MCF 10A (cell line): ENCODE measurements at regions of chr4 and their contacts with region 1.

Region 1: GRCh38 chr4:184384056-184384809 is 90.1 kb downstream of the IRF2 start:
- DNase-seq: peak; percentile 95
- H3K4me3 Mint-ChIP-seq: peak overlapping the region; percentile 68
- H3K27ac Mint-ChIP-seq: peak overlapping the region; percentile 75
- H3K4me1 Mint-ChIP-seq: peaks cover 28% of the 10 kb centered on the region
- H3K27me3 Mint-ChIP-seq: no peaks in the 10 kb centered on the region
- CTCF ChIP-seq: no peak

Region 2: GRCh38 chr4:184287697-184288255 is 96.5 kb before region 1 on chr4:
- CTCF ChIA-PET with region 1: no interaction called
- POLR2A ChIA-PET with region 1: interaction called, 10 read pairs
- intact Hi-C with region 1: no loop called
- DNase-seq: peak; percentile 43
- H3K4me3 Mint-ChIP-seq: no peak overlapping the region
- H3K27ac Mint-ChIP-seq: no peak overlapping the region
- H3K4me1 Mint-ChIP-seq: no peaks in the 10 kb centered on the region
- H3K27me3 Mint-ChIP-seq: no peaks in the 10 kb centered on the region
- CTCF ChIP-seq: no peak

Region 3: GRCh38 chr4:184329659-184330400 is 54.4 kb before region 1 on chr4:
- CTCF ChIA-PET with region 1: interaction called, 6 read pairs
- POLR2A ChIA-PET with region 1: interaction called, 12 read pairs
- intact Hi-C with region 1: no loop called
- DNase-seq: no peak
- H3K4me3 Mint-ChIP-seq: no peak overlapping the region
- H3K27ac Mint-ChIP-seq: no peak overlapping the region
- H3K4me1 Mint-ChIP-seq: peaks cover 11% of the 10 kb centered on the region
- H3K27me3 Mint-ChIP-seq: no peaks in the 10 kb centered on the region
- CTCF ChIP-seq: no peak

Region 4: DNA sequence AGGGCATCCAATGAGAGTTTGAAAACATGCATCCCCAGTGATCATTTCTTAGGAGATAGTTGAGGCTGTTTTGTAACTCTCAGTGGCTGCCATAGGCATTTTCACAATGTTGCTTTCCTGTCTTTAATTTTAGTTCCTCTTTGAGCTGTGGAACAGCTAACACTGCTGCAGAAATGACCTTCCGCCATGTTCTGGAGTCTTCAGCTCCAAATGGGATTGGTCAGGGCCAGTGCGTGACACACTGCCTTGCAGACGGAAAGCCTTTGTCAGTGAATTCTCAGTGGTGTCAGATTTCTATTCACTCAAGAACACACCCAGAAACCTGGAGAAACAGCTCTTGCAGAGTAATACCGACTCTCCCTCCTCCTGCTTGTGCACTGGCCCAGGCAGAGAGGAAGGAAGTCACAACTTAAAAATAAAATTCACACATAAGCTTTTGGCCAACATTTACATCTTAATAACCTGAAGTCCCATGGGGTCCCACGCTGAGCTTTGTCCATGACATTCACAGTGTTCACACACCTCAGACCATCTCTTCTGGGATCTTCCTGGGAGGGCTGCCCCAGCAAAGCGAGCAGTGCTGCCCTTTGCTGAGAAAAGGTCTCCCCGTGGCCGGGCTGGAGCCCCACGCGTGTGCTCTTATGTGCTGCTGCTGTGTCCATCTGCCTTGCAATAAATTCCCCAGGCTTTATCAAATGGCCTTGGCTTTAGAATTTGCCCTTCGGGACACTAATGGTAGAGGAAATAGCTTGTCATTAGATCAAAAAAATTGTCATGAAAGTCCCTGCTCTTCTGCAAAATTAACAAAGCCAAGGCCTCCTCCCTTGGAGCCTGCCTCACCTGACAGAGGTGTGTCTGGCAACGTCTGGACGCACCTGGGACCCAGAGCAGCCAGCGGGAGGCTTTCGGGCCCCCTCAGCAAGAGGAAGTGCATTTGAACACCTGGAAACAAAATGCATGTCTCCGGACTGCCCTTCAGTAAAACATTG is 36.7 kb before region 1 on chr4:
- CTCF ChIA-PET with region 1: interaction called, 3 read pairs
- POLR2A ChIA-PET with region 1: interaction called, 12 read pairs
- intact Hi-C with region 1: no loop called
- DNase-seq: peak; percentile 81
- H3K4me3 Mint-ChIP-seq: no peak overlapping the region
- H3K27ac Mint-ChIP-seq: no peak overlapping the region
- H3K4me1 Mint-ChIP-seq: peaks cover 14% of the 10 kb centered on the region
- H3K27me3 Mint-ChIP-seq: no peaks in the 10 kb centered on the region
- CTCF ChIP-seq: no peak

Region 5: DNA sequence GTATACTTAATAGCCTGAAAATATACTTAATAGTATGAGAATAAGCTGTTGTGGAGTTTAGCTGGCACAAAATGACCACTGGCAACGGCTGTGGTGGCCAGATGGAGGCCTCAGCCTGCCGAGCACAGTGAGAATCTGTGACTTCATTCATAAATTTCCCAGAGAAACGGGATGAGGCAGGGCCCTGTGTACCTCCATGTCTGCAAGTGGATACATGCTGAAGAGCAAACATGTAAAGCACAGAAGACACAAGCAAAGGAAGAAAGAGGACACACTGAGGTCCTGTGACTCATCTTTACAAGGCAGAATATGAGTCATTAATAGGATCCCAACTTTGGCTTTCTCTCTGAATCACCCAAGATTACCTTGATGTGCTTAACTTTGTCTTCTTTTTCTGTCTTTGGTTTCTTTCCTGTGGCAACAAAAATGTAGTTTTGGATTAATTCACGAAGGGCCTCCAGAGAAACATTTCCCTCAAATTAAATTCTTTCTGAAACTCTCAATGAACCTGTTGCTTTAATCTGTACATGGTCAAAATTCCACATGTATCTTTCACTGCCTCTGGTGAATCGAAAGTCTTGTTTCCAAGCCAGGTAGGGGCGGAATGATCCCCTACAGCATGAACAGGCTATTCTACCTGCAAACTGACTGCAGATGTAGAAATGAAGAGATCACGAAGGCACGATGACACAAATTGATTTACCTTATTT is 33.7 kb after region 1 on chr4:
- CTCF ChIA-PET with region 1: interaction called, 4 read pairs
- POLR2A ChIA-PET with region 1: interaction called, 16 read pairs
- intact Hi-C with region 1: loop called (anchors 1 kb)
- DNase-seq: peak; percentile 95
- H3K4me3 Mint-ChIP-seq: peak overlapping the region; percentile 47
- H3K27ac Mint-ChIP-seq: peak overlapping the region; percentile 47
- H3K4me1 Mint-ChIP-seq: peaks cover 24% of the 10 kb centered on the region
- H3K27me3 Mint-ChIP-seq: no peaks in the 10 kb centered on the region
- CTCF ChIP-seq: no peak